ENCODE measurements at regions of chrX and their contacts with region 1.

Region 1: GRCh38 chrX:108641589-108642272 is 94.6 kb downstream of the IRS4 start:
- DNase-seq: no peak

Region 2: DNA sequence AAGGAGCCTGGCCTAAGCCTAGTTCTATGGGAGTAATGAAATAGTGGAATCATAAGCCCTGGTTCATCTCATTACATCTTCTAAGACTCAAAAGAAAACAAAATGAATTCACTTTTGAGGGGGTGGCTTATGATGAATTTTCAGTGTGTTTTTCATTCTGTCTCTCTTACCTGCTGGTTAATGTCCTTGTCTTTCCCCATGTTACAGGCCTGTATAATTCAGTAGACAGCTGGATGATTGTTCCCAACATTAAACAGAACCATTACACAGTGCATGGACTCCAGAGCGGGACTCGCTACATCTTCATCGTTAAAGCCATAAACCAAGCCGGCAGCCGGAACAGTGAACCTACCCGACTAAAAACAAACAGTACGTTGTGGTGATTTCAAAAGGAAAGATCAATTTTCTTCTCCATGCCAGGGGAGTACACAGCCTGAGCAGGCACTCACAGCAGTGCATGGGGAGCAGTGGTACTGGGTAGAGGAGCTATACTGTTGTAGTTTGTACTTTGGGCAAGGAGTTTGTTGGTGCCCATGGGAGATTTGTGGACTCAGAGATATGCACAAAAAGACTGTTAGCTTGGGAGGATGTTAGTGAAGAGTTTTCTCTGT is 717.5 kb before region 1 on chrX:
- intact Hi-C with region 1: no loop called
- DNase-seq: no peak

Region 3: DNA sequence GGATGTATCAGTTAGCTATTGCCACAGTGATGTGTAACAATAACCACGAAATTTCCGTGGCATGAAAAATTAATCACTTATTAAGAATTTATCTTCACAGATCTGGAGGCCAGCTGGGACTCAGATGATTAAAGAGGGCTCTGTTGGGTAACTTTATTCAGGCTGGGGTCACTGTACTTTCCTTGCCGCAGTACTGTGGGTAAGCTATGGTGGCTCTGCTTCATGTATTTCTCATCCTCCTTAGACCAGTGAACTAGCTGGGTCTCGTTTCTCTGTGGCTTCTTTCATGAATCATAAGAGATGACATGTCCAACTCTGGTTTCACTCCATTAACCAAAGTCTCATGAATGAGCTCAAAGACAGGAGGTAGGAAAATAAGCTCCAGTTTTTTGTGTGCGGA is 673.1 kb before region 1 on chrX:
- intact Hi-C with region 1: loop called in 1 of 2 experiments (anchors 5 kb)
- DNase-seq: no peak

Region 4: GRCh38 chrX:108610141-108610540 is 31.6 kb before region 1 on chrX:
- intact Hi-C with region 1: no loop called
- DNase-seq: no peak

Measured in posterior vena cava (tissue), 2 donors.